ENCODE measurements at regions of chr2 and their contacts with region 1.

Region 1: DNA sequence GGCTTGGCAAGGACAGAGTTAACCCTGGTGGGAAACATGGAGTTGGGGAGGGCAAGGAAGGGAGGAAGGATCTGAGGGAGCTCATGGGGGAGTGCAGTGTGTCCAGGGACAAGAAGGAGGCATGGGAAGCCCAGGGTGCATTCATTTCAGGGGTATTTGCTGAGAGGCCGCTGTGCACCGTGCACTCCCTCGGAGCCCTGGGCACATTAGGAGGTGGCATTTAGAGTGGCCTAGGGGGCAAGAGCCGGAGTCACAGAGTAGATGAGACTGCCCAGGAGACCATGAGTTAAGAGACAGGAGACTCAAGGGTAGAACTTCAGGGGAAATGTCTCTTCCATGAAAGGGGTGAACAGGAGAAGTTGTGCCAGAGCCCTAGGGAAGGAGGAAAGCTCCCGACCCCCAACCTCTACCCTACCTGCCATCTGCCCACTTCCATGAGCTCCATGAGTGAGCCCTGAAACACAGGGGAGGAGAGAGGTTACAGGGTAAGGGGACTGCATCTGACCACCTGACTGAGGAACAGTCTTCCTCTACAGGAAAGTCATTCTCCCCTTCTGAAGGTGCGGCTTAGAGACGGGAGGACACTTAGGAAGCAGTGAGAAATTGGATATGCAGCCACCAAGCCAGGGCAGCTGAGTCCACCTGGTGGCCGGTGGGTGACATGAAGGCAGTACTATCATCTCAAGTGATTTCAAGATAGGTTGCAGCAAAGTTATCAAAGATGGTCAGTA is 58.5 kb upstream of the COPS8 start:
- DNase-seq: peak; percentile 78
- ATAC-seq: peak; percentile 74
- H3K4me3 ChIP-seq: no peak overlapping the region
- H3K27ac ChIP-seq: no peak overlapping the region
- H3K4me1 ChIP-seq: peaks cover 30% of the 10 kb centered on the region
- H3K27me3 ChIP-seq: no peaks in the 10 kb centered on the region
- CTCF ChIP-seq: peak; percentile 96

Region 2: GRCh38 chr2:236512902-236513435 is 514.2 kb before region 1 on chr2:
- CTCF ChIA-PET with region 1: interaction called, 9 read pairs
- POLR2A ChIA-PET with region 1: no interaction called
- intact Hi-C with region 1: loop called (anchors 1 kb)
- DNase-seq: peak; percentile 67
- ATAC-seq: peak; percentile 90
- H3K4me3 ChIP-seq: no peak overlapping the region
- H3K27ac ChIP-seq: no peak overlapping the region
- H3K4me1 ChIP-seq: no peaks in the 10 kb centered on the region
- H3K27me3 ChIP-seq: no peaks in the 10 kb centered on the region
- CTCF ChIP-seq: peak; percentile 86

Region 3: GRCh38 chr2:236663287-236664101 is 363.7 kb before region 1 on chr2:
- CTCF ChIA-PET with region 1: interaction called, 4 read pairs
- POLR2A ChIA-PET with region 1: no interaction called
- intact Hi-C with region 1: loop called (anchors 10 kb)
- DNase-seq: no peak
- ATAC-seq: no peak
- H3K4me3 ChIP-seq: no peak overlapping the region
- H3K27ac ChIP-seq: no peak overlapping the region
- H3K4me1 ChIP-seq: peaks cover 33% of the 10 kb centered on the region
- H3K27me3 ChIP-seq: no peaks in the 10 kb centered on the region
- CTCF ChIP-seq: no peak

Region 4: DNA sequence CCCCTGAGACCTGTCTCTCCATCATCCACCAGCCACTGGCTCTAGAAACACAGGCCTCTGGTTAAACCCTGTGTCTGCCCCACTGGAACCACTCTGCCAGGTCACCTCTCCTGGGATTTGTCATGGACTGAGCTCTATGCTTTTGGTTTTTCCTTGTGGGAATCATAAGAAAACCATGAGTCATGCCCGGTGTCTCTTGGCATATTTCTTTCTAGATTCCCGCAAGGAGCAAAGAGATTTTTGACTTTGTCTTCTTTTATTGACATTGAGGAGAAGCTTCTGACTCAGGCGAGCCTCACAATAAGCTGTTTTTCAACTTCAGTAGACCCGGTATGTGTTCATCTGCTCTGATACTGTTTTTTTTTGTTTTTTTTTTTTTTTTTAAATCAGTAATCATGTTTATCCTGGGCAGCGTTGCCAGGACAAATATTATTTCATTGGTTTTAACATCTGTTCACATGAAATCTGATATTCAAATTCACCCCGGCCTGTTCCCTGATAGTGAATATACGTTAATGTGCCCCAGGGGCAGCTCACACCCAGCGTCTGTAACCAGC is 250.4 kb before region 1 on chr2:
- CTCF ChIA-PET with region 1: no interaction called
- POLR2A ChIA-PET with region 1: no interaction called
- intact Hi-C with region 1: loop called (anchors 5 kb)
- DNase-seq: peak; percentile 96
- ATAC-seq: peak; percentile 91
- H3K4me3 ChIP-seq: peak overlapping the region; percentile 31; the same call in 1 of the 2 replicates
- H3K27ac ChIP-seq: peak overlapping the region; percentile 93
- H3K4me1 ChIP-seq: peaks cover 21% of the 10 kb centered on the region
- H3K27me3 ChIP-seq: no peaks in the 10 kb centered on the region
- CTCF ChIP-seq: no peak

Region 5: GRCh38 chr2:236871500-236872001 is 155.6 kb before region 1 on chr2:
- CTCF ChIA-PET with region 1: interaction called, 3 read pairs
- POLR2A ChIA-PET with region 1: no interaction called
- intact Hi-C with region 1: loop called (anchors 10 kb)
- DNase-seq: peak; percentile 90
- ATAC-seq: peak; percentile 88
- H3K4me3 ChIP-seq: peak overlapping the region; percentile 0; the same call in 1 of the 2 replicates
- H3K27ac ChIP-seq: peak overlapping the region; percentile 90
- H3K4me1 ChIP-seq: peaks cover 47% of the 10 kb centered on the region
- H3K27me3 ChIP-seq: no peaks in the 10 kb centered on the region
- CTCF ChIP-seq: no peak

Region 6: DNA sequence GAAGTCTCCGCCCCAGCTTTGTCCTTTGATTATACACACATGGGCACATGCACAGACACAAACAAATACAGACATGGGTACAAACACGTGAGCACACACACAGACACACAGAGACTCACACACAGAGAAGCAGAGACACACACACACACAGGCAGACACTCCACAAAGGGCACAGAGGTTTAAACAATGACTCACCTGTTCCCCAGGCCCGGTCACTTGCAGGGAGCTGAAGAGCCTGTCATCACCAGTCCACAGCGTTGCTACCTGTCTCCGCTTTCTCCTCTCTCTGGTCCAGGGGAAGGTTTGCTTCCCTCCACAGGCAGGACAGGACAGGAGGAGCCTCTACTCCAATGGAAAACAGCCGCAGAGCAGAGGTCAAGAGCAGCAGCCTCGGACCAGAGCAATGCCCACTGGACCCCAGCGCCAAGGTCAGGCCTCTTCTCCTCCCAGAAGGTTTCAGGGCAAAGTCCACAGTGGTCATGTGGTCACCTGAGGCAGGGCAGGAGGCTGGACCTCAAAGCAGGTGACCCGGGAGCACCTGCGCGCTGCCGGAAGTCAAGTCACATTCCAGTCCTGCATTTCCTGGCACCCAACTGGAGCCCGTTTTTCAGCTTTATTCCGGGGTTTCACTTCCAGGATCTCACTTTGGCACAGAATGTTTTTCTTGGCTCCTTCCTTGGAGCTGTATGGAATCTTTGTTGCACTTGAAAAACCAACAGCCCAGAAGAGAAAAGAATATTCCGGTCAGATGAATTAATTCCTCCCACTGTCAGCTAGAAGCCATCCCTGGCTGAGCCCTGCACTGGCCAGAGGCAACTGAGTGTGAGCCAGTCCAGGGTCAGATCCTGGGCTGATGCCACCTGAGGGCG is 563.4 kb after region 1 on chr2 and contains the start of gene RAB17:
- CTCF ChIA-PET with region 1: no interaction called
- POLR2A ChIA-PET with region 1: no interaction called
- intact Hi-C with region 1: no loop called
- DNase-seq: peak; percentile 65
- ATAC-seq: peak; percentile 80
- H3K4me3 ChIP-seq: peak within 1 kb of the TSS; percentile 71
- H3K27ac ChIP-seq: peak within 1 kb of the TSS; percentile 87
- H3K4me1 ChIP-seq: peaks cover 14% of the 10 kb centered on the region
- H3K27me3 ChIP-seq: no peaks in the 10 kb centered on the region
- CTCF ChIP-seq: no peak
- total RNA-seq, gene RAB17: 28.9 and 52.2 TPM in 2 replicates

Measured in PC-3 (cell line).